CD4-positive, alpha-beta memory T cell (primary cell): ENCODE measurements at regions of chr3 and their contacts with region 1.

Region 1: DNA sequence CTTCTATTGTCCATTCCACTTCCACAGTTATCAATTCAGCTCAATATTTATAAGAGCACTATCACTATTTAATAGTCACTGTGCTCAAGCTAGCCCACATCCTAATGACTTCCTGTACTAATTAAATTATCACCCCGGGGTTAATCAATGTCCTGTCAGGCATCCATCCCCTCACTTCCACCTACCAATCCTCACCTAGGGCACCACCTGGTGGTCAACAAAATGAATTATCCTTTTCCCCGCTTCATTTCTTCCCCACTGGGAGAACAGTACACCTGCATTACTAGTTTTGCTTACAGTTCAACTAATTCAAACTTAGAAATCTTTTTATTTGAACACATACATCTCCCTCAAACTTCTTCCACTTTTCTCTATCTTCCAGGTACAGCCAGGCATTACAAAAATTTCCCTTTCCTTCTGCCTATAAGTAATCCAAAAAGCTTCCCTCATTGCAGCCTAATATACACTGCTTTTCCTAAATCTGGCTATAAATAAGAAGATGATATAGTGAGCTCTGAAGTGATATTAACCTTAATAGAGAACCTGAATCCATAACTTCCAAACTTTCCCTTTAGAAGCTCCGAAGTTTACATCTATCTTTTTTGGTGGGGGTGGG is 68.5 kb downstream of the TMCC1 start:
- DNase-seq: peak; percentile 38 to 59 (median 50)
- H3K4me3 ChIP-seq: no peak overlapping the region
- H3K4me3 Mint-ChIP-seq: no peak overlapping the region
- H3K27ac ChIP-seq: no peak overlapping the region
- H3K27ac Mint-ChIP-seq: peak overlapping the region in 4 of 7 donors; percentile 9 to 38 (median 18)
- H3K4me1 ChIP-seq: peaks cover 19% of the 10 kb centered on the region
- H3K4me1 Mint-ChIP-seq: peaks cover 17 to 32% (median 19%) of the 10 kb centered on the region in 4 donors
- H3K27me3 ChIP-seq: no peaks in the 10 kb centered on the region
- H3K27me3 Mint-ChIP-seq: no peaks in the 10 kb centered on the region

Region 2: GRCh38 chr3:129383292-129383860 is 441.7 kb before region 1 on chr3:
- CTCF ChIA-PET with region 1: interaction called, 24 read pairs
- POLR2A ChIA-PET with region 1: no interaction called
- intact Hi-C with region 1: no loop called
- DNase-seq: peak; percentile 13 to 50 (median 32)
- H3K4me3 ChIP-seq: no peak overlapping the region
- H3K4me3 Mint-ChIP-seq: no peak overlapping the region
- H3K27ac ChIP-seq: no peak overlapping the region
- H3K27ac Mint-ChIP-seq: peak overlapping the region in 1 of 7 donors; percentile 29
- H3K4me1 ChIP-seq: no peaks in the 10 kb centered on the region
- H3K4me1 Mint-ChIP-seq: peaks cover 0 to 3% (median 0%) of the 10 kb centered on the region in 4 donors
- H3K27me3 ChIP-seq: no peaks in the 10 kb centered on the region
- H3K27me3 Mint-ChIP-seq: no peaks in the 10 kb centered on the region

Region 3: DNA sequence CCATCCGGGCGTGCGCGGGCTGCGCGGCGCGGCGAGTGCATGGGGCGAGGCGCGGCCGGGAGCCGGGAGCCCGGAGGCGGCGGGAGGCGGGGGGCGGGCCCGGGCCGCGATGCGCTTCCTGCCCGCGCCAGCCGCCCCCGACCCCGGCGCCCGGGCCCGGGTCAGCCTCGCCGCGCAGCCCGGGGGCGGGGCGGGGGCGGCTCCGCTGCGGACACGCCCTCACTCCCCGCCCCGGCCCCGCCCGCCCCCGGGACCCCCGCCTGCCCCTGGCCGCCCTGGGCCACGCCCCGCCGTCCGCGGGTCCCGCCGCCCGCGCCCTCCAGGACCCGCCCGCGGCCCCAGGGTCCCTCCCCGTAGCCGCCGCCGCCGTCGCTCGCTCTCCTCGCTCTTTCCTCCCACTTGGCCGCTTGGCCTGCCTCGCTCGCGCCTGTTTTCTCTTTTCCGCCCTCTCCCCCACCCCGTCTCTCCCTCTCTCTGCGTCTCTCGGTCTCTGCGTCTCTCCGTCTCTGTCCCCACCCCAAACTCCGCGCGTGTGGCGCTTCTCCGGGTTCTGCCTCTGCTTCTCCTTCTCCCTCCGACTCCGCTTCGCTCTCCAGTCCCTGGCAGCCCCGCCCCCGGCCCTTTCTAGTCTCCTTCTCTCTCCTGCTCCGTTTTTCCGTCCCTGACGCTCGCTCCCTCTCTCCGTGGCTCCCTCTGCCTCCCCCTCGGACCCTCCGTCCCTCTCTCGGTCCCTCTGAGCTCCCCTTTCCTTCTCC is 218.2 kb before region 1 on chr3 and contains the start of gene PLXND1:
- CTCF ChIA-PET with region 1: no interaction called
- POLR2A ChIA-PET with region 1: no interaction called
- intact Hi-C with region 1: no loop called
- DNase-seq: peak in 4 of 5 donors; percentile 36 to 55 (median 46)
- H3K4me3 ChIP-seq: peak within 1 kb of the TSS in 1 of 2 donors; percentile 62
- H3K4me3 Mint-ChIP-seq: peak within 1 kb of the TSS; percentile 91 to 99 (median 95)
- H3K27ac ChIP-seq: no peak within 1 kb of the TSS
- H3K27ac Mint-ChIP-seq: peak within 1 kb of the TSS; percentile 81 to 99 (median 93)
- H3K4me1 ChIP-seq: peaks cover 28% of the 10 kb centered on the region
- H3K4me1 Mint-ChIP-seq: peaks cover 21 to 50% (median 32%) of the 10 kb centered on the region in 4 donors
- H3K27me3 ChIP-seq: no peaks in the 10 kb centered on the region
- H3K27me3 Mint-ChIP-seq: peaks cover 2 to 4% of the 10 kb centered on the region in 2 donors
- total RNA-seq, gene PLXND1: 71.4 to 72.5 TPM

Region 4: GRCh38 chr3:129650256-129650872 is 174.7 kb before region 1 on chr3:
- CTCF ChIA-PET with region 1: interaction called, 20 read pairs
- POLR2A ChIA-PET with region 1: interaction called, 3 read pairs
- intact Hi-C with region 1: loop called (anchors 1 kb)
- DNase-seq: peak; percentile 38 to 55 (median 43)
- H3K4me3 ChIP-seq: no peak overlapping the region
- H3K4me3 Mint-ChIP-seq: no peak overlapping the region
- H3K27ac ChIP-seq: no peak overlapping the region
- H3K27ac Mint-ChIP-seq: peak overlapping the region in 2 of 7 donors; percentile 59 to 81
- H3K4me1 ChIP-seq: no peaks in the 10 kb centered on the region
- H3K4me1 Mint-ChIP-seq: peaks cover 0 to 4% (median 1%) of the 10 kb centered on the region in 4 donors
- H3K27me3 ChIP-seq: no peaks in the 10 kb centered on the region
- H3K27me3 Mint-ChIP-seq: no peaks in the 10 kb centered on the region

Region 5: GRCh38 chr3:129893581-129894070 is 68.6 kb after region 1 on chr3 and contains the start of gene TMCC1:
- CTCF ChIA-PET with region 1: interaction called, 3 read pairs
- POLR2A ChIA-PET with region 1: no interaction called
- intact Hi-C with region 1: loop called (anchors 5 kb)
- DNase-seq: peak; percentile 90 to 94 (median 92)
- H3K4me3 ChIP-seq: peak within 1 kb of the TSS; percentile 87 to 96
- H3K4me3 Mint-ChIP-seq: peak within 1 kb of the TSS; percentile 88 to 96 (median 92)
- H3K27ac ChIP-seq: peak within 1 kb of the TSS; percentile 82
- H3K27ac Mint-ChIP-seq: peak within 1 kb of the TSS; percentile 92 to 97 (median 93)
- H3K4me1 ChIP-seq: peaks cover 46% of the 10 kb centered on the region
- H3K4me1 Mint-ChIP-seq: peaks cover 23 to 47% (median 37%) of the 10 kb centered on the region in 4 donors
- H3K27me3 ChIP-seq: no peaks in the 10 kb centered on the region
- H3K27me3 Mint-ChIP-seq: peaks cover 0 to 1% of the 10 kb centered on the region in 2 donors
- total RNA-seq, gene TMCC1: 36.4 to 39.3 TPM

Region 6: DNA sequence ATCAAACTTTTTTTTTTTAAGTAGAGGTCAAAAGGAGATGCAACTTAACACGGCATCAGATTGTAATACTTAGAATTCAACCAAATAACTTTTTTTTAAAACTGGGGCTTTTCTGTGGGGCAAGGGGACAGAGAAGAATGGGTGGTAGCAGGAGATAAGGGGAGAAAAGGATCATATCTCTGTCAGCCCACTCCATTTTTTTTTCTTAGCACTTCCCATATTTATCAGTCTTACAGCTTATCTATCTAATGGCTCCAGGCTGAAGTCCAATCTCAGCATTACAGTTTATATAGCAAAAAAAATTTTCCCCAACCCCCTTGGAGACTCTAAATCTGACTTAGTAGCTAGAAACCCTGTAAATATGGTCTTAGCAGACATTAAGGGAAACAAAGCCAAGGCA is 852.3 kb after region 1 on chr3:
- CTCF ChIA-PET with region 1: no interaction called
- POLR2A ChIA-PET with region 1: no interaction called
- intact Hi-C with region 1: no loop called
- DNase-seq: no peak
- H3K4me3 ChIP-seq: no peak overlapping the region
- H3K4me3 Mint-ChIP-seq: no peak overlapping the region
- H3K27ac ChIP-seq: no peak overlapping the region
- H3K27ac Mint-ChIP-seq: no peak overlapping the region
- H3K4me1 ChIP-seq: no peaks in the 10 kb centered on the region
- H3K4me1 Mint-ChIP-seq: no peaks in the 10 kb centered on the region
- H3K27me3 ChIP-seq: no peaks in the 10 kb centered on the region
- H3K27me3 Mint-ChIP-seq: no peaks in the 10 kb centered on the region